Activated T-helper 1 cell treated with anti-CD3 and anti-CD28 coated beads, Interleukin-12 subunit alpha, Interleukin-12 subunit beta, Interleukin-2, Interleukin-4 antibody, amounts not matched to agents 30 ng/mL and 10 ng/mL and 1 ng/mL, durations not matched to agents 14 hours and 24 hours and 36 hours (primary cell): ENCODE measurements at regions of chr2 and their contacts with region 1.

Region 1: DNA sequence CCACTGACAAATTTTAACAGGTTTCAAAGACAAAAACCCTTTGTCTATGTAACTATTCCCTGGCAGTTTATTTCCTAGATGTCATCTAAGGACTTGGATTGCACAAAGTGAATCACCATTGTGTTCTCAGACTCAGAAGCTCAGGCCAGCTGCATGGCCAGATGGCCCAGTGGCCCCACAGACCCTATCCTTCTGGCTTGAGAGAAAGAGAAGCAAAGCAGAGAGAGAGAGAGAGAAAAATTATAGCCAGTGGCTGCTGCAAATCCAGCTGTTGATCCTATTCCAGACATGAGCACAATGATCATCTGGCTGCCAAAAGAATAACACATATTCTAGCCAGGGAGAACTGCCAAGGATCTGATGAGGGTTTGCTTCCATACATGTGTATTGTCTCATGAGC is 25.8 kb downstream of the CTLA4 start:
- DNase-seq: no peak
- H3K4me3 Mint-ChIP-seq: no peak overlapping the region
- H3K27ac Mint-ChIP-seq: peak overlapping the region; percentile 89
- H3K4me1 Mint-ChIP-seq: peaks cover 73% of the 10 kb centered on the region
- H3K27me3 Mint-ChIP-seq: no peaks in the 10 kb centered on the region

Region 2: DNA sequence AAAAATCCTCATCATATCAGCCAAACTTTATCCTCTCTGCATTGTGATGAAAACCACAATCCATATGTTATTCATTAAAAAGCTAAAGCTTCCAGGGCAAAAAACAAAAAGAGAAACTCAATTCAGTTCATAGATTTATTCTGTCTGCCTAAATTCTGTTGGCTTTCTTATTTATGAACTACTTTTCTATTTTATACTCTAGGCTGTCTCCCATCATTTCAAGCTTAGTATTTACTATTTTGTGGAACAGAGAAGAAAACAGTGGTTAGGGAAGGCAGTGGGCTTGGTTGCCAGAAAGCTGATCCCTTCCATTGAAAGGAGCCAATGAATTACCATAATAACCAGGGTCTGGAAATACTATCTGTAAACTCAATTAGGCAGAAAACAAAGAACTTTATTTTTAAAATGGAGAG is 430.1 kb before region 1 on chr2:
- intact Hi-C with region 1: no loop called
- DNase-seq: no peak
- H3K4me3 Mint-ChIP-seq: no peak overlapping the region
- H3K27ac Mint-ChIP-seq: no peak overlapping the region
- H3K4me1 Mint-ChIP-seq: peaks cover 5% of the 10 kb centered on the region
- H3K27me3 Mint-ChIP-seq: no peaks in the 10 kb centered on the region

Region 3: GRCh38 chr2:203786549-203787351 is 106.7 kb before region 1 on chr2:
- intact Hi-C with region 1: no loop called
- DNase-seq: no peak
- H3K4me3 Mint-ChIP-seq: no peak overlapping the region
- H3K27ac Mint-ChIP-seq: no peak overlapping the region
- H3K4me1 Mint-ChIP-seq: peaks cover 37% of the 10 kb centered on the region
- H3K27me3 Mint-ChIP-seq: peaks cover 2% of the 10 kb centered on the region

Region 4: GRCh38 chr2:203951366-203951902 is 58.0 kb after region 1 on chr2:
- intact Hi-C with region 1: loop called (anchors 2 kb)
- DNase-seq: peak; percentile 34
- H3K4me3 Mint-ChIP-seq: peak overlapping the region; percentile 85
- H3K27ac Mint-ChIP-seq: peak overlapping the region; percentile 92
- H3K4me1 Mint-ChIP-seq: peaks cover 85% of the 10 kb centered on the region
- H3K27me3 Mint-ChIP-seq: no peaks in the 10 kb centered on the region